ENCODE measurements at regions of chr4 and their contacts with region 1.

Region 1: GRCh38 chr4:22389240-22389870 is 126.5 kb downstream of the ADGRA3 start:
- DNase-seq: peak; percentile 66
- ATAC-seq: peak; percentile 60
- H3K4me3 Mint-ChIP-seq: no peak overlapping the region
- H3K27ac Mint-ChIP-seq: no peak overlapping the region
- H3K4me1 Mint-ChIP-seq: no peaks in the 10 kb centered on the region
- H3K27me3 Mint-ChIP-seq: no peaks in the 10 kb centered on the region

Region 2: GRCh38 chr4:21790438-21791029 is 598.8 kb before region 1 on chr4:
- CTCF ChIA-PET with region 1: interaction called, 91 read pairs
- POLR2A ChIA-PET with region 1: no interaction called
- DNase-seq: no peak
- ATAC-seq: no peak
- H3K4me3 Mint-ChIP-seq: no peak overlapping the region
- H3K27ac Mint-ChIP-seq: no peak overlapping the region
- H3K4me1 Mint-ChIP-seq: peaks cover 3% of the 10 kb centered on the region
- H3K27me3 Mint-ChIP-seq: no peaks in the 10 kb centered on the region

Region 3: DNA sequence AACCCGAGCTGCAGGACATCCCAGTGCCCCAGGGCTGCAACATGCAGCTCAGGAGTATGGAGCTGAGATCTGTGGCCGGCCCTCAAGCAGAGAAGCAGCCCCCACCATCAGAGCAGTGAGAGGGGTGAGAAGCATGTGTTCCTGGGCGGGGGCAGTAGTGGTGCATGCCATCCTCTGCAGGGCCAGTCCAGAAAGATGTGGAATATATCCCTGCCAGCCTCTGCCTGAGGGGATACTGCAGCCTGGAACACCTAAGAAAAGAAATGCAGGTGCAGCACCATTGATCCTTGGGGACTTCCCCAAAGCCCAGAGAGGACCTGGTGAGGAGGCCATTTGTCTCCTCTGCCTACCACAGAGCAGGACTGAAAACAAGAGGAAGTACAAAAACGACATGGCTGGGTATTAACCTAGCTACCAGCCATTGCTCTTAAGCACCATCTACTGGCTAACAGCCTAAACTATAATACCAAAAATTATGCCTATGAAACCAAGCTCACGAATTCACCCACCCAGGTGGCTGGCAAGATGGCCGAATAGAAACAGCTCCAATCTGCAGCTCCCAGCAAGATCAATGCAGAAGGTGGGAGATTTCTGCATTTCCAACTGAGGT is 32.3 kb before region 1 on chr4:
- CTCF ChIA-PET with region 1: interaction called, 12 read pairs
- POLR2A ChIA-PET with region 1: no interaction called
- DNase-seq: peak; percentile 22
- ATAC-seq: no peak
- H3K4me3 Mint-ChIP-seq: no peak overlapping the region
- H3K27ac Mint-ChIP-seq: no peak overlapping the region
- H3K4me1 Mint-ChIP-seq: no peaks in the 10 kb centered on the region
- H3K27me3 Mint-ChIP-seq: no peaks in the 10 kb centered on the region

Region 4: DNA sequence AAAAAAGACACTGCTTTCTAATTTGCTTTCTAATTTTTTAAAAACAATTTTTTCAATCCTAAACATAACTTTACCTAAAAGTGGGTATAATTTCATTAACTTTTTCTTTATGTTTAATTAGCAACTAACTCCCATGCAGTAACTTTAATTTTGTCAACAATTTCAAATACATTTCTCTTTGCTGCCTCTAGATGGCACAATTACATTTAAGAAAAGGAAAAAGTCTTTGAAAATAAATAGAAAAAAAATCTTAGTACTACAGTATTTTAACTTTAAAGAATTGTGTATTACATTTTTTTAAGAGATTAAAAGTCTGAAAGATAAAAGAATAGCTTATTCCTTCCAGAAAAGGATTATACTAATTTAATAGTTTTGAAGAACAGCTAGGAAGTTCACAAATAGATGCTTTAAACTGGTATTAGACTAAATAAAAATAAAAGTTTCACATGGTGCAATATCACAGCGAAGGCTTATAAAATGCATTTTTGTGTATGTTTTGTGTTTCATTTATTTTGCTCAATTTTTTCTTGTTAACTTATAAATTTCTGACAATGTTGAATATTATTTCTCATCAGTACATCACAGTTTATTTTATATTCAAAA is 21.4 kb after region 1 on chr4:
- CTCF ChIA-PET with region 1: interaction called, 12 read pairs
- POLR2A ChIA-PET with region 1: no interaction called
- DNase-seq: no peak
- ATAC-seq: no peak
- H3K4me3 Mint-ChIP-seq: no peak overlapping the region
- H3K27ac Mint-ChIP-seq: no peak overlapping the region
- H3K4me1 Mint-ChIP-seq: no peaks in the 10 kb centered on the region
- H3K27me3 Mint-ChIP-seq: no peaks in the 10 kb centered on the region

Measured in activated CD8-positive, alpha-beta T cell treated with anti-CD3 and anti-CD28 coated beads, Interleukin-2, amount 10 ng/mL, durations not matched to agents 7 days and 5 days (primary cell).